ENCODE measurements at regions of chr4 and their contacts with region 1.

Region 1: DNA sequence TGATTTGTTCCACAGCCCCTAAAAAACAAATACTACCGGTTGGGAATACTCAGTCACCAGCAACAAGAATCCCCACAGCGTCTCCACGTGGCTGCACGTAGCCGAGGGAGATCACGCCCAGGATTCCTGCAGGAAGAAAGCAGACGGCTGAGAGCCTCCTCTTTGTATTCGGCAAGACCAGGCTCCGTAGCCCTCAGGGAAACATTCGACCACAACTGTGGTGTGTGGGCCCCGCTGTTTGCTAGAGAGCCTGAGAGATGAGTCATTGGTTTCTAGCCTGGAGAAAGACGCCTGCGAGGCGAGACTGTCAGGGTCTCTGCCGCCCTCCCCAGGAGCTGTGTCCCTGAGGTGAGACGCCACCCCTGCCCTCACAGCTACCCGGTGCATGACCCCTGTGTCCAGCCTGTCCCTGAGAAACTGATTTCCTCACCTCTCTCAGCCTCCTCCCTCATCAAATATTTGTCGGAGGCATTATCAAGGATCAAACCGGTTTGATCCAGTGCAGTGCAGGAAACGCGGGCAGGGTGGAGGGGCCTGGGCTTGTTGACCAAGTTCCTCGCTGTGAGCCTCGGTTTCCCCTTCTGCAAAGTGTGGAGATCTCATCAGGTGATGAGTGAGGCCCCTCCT is 4.7 kb upstream of the S100P start:
- DNase-seq: peak; percentile 79 to 84
- ATAC-seq: peak; percentile 80 to 85 (median 82)
- H3K4me3 ChIP-seq: peak overlapping the region; percentile 45
- H3K4me3 Mint-ChIP-seq: peak overlapping the region; percentile 98
- H3K27ac ChIP-seq: peak overlapping the region; percentile 77
- H3K27ac Mint-ChIP-seq: peak overlapping the region; percentile 97 to 98
- H3K4me1 ChIP-seq: peaks cover 83% of the 10 kb centered on the region
- H3K4me1 Mint-ChIP-seq: peaks cover 53 to 80% of the 10 kb centered on the region in 2 donors
- H3K27me3 ChIP-seq: no peaks in the 10 kb centered on the region
- H3K27me3 Mint-ChIP-seq: no peaks in the 10 kb centered on the region
- CTCF ChIP-seq: no peak

Region 2: DNA sequence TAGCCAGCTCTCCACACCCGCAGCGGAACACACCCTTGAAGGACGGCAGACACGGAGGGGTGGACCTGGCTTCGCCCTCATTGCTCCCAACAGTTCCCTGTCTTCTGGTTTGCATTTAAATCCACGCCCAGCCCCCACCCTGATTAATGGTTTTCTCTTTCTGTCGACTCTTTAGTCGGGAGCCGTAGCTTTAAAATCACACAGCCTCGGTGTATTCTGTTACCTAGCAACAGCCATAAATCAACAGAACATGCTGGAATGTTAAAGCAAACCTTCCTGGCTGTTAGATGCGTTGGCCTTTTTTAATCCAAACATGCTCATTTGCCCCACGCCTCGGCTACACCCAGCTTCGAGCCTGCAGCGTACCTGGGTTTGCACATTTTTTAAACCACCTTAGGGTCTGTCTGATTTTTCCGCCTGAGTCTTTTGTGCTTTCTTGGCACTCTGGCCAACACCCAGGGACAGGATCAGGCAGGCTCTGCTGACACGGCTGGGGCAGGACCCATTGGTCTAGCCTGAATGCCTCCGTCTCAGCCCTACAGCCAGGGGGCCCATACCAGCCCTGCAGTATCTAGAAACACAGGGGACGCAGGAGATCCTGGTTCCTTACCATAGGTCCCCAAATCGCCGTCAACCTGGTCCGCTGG is 195.2 kb before region 1 on chr4:
- intact Hi-C with region 1: no loop called
- DNase-seq: no peak
- ATAC-seq: no peak
- H3K4me3 ChIP-seq: no peak overlapping the region
- H3K4me3 Mint-ChIP-seq: no peak overlapping the region
- H3K27ac ChIP-seq: no peak overlapping the region
- H3K27ac Mint-ChIP-seq: no peak overlapping the region
- H3K4me1 ChIP-seq: no peaks in the 10 kb centered on the region
- H3K4me1 Mint-ChIP-seq: no peaks in the 10 kb centered on the region
- H3K27me3 ChIP-seq: no peaks in the 10 kb centered on the region
- H3K27me3 Mint-ChIP-seq: peaks cover 21 to 40% of the 10 kb centered on the region in 2 donors
- CTCF ChIP-seq: no peak

Region 3: GRCh38 chr4:6709230-6710114 is 20.5 kb after region 1 on chr4 and contains the start of gene MRFAP1L1:
- intact Hi-C with region 1: loop called (anchors 2 kb)
- DNase-seq: peak; percentile 96 to 98
- ATAC-seq: peak; percentile 86 to 99 (median 92)
- H3K4me3 ChIP-seq: peak within 1 kb of the TSS; percentile 94
- H3K4me3 Mint-ChIP-seq: peak within 1 kb of the TSS; percentile 99
- H3K27ac ChIP-seq: peak within 1 kb of the TSS; percentile 87
- H3K27ac Mint-ChIP-seq: peak within 1 kb of the TSS; percentile 98 to 100
- H3K4me1 ChIP-seq: peaks cover 27% of the 10 kb centered on the region
- H3K4me1 Mint-ChIP-seq: peaks cover 69 to 70% of the 10 kb centered on the region in 2 donors
- H3K27me3 ChIP-seq: no peaks in the 10 kb centered on the region
- H3K27me3 Mint-ChIP-seq: no peaks in the 10 kb centered on the region
- CTCF ChIP-seq: no peak
- total RNA-seq, gene MRFAP1L1: 38.4 to 60.9 (median 40.8) TPM

Measured in natural killer cell (primary cell).